Activated T-helper 2 cell treated with anti-CD3 and anti-CD28 coated beads, Interferon-gamma antibody, Interleukin-2, Interleukin-4, amounts not matched to agents 10 μg/mL and 5 μg/mL and 100 μg/mL, durations not matched to agents 14 hours and 24 hours and 36 hours (primary cell): ENCODE measurements at regions of chr5 and their contacts with region 1.

Region 1: DNA sequence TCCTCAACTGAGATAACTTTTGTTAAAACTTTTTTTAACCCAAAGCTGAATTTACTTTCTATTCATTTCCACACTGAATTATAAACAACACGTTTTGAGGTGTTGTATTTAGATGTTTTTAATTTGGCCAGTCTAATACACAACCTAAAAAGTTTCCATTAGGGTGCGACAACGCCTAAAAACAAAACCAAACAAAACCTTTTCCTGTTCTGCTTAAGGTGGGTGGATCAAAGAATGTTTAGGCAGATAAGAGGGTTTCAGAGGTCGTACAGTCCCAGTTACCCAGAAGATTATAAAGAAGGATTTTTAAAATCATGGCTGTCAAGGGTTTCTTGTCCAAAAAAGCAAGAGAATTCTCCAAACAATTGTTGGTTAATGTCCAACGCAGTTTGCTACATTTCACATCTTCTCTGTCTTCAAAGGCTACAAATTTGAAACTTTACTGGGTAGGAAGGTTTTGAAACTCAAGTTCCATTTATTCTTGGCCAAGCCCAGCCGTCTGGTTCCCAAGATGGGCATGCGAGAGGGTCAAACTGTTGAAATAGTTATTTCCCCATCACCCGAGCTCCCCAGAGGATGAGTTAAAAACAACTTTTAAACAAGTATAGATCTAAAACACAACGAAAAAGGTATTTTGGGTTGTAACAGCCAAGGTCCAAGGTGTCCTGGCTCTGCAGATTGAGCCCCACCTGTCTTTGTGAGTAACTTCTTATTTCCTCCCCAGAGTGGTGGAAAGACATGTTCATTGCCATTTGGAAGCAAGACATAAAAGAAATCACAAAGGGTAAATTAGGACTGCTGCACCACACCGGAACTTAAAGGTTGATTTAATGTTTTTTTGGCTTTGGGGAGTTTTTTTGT is 122.8 kb upstream of the MAP3K1 start:
- DNase-seq: no peak
- H3K4me3 Mint-ChIP-seq: peak overlapping the region; percentile 28
- H3K27ac Mint-ChIP-seq: peak overlapping the region; percentile 30
- H3K4me1 Mint-ChIP-seq: peaks cover 62% of the 10 kb centered on the region
- H3K27me3 Mint-ChIP-seq: no peaks in the 10 kb centered on the region

Region 2: GRCh38 chr5:56481428-56482357 is 210.9 kb before region 1 on chr5:
- intact Hi-C with region 1: loop called (anchors 5 kb)
- DNase-seq: no peak
- H3K4me3 Mint-ChIP-seq: peak overlapping the region; percentile 78
- H3K27ac Mint-ChIP-seq: peak overlapping the region; percentile 82
- H3K4me1 Mint-ChIP-seq: peaks cover 44% of the 10 kb centered on the region
- H3K27me3 Mint-ChIP-seq: no peaks in the 10 kb centered on the region

Region 3: GRCh38 chr5:56670118-56670483 is 22.5 kb before region 1 on chr5:
- intact Hi-C with region 1: loop called (anchors 1 kb)
- DNase-seq: peak; percentile 44
- H3K4me3 Mint-ChIP-seq: no peak overlapping the region
- H3K27ac Mint-ChIP-seq: peak overlapping the region; percentile 46
- H3K4me1 Mint-ChIP-seq: peaks cover 37% of the 10 kb centered on the region
- H3K27me3 Mint-ChIP-seq: peaks cover 4% of the 10 kb centered on the region

Region 4: GRCh38 chr5:56710826-56711590 is 18.4 kb after region 1 on chr5:
- intact Hi-C with region 1: loop called (anchors 2 kb)
- DNase-seq: no peak
- H3K4me3 Mint-ChIP-seq: no peak overlapping the region
- H3K27ac Mint-ChIP-seq: no peak overlapping the region
- H3K4me1 Mint-ChIP-seq: peaks cover 21% of the 10 kb centered on the region
- H3K27me3 Mint-ChIP-seq: peaks cover 27% of the 10 kb centered on the region